MCF 10A (cell line): ENCODE measurements at regions of chr1 and their contacts with region 1.

Region 1: GRCh38 chr1:160801836-160802580 is 6.0 kb downstream of the LY9 start:
- DNase-seq: no peak
- H3K4me3 Mint-ChIP-seq: no peak overlapping the region
- H3K27ac Mint-ChIP-seq: no peak overlapping the region
- H3K4me1 Mint-ChIP-seq: no peaks in the 10 kb centered on the region
- H3K27me3 Mint-ChIP-seq: no peaks in the 10 kb centered on the region
- CTCF ChIP-seq: no peak

Region 2: DNA sequence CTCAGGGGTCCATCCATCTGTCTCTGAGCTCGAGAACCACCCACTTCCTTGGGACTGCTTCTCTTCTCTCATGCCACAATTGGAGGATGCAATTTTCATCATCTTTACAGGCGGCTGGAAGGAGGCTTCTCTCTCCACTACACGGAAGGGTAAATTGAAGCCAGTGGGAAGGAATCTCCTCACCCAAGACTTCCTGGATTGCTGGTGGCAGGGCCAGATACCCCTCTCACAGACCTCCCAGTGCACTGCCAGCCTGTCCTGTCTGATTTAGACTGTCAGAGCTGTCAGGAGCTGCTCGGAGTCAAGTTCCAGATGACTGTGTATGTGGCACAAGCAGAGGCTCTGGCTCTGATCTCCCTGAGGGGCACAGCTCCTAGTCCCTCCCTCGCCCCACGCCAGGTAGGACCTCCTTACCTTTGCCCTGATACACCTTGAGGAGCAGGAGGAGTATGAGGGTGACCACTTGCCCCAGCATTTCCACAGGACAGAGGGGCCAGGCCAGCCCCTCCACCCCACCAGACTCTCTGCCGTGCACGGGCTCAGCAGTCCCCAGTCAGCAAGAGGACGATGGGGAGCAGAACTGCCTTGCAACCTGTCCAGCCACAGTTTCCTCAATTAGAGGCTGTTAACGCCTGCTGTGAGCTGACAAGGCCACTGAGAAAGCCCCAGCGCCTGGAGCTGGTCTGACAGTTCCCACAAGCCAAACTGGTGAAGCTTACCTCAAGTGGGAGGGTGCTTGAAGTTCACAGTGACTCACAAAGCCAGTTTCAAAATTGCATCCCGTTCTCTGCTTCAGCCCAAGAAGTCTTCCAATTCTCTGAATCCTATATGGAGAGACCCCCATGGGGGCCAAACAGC is 60.4 kb after region 1 on chr1 and contains the start of gene CD244:
- CTCF ChIA-PET with region 1: no interaction called
- POLR2A ChIA-PET with region 1: no interaction called
- intact Hi-C with region 1: no loop called
- DNase-seq: no peak
- H3K4me3 Mint-ChIP-seq: no peak within 1 kb of the TSS
- H3K27ac Mint-ChIP-seq: no peak within 1 kb of the TSS
- H3K4me1 Mint-ChIP-seq: no peaks in the 10 kb centered on the region
- H3K27me3 Mint-ChIP-seq: no peaks in the 10 kb centered on the region
- CTCF ChIP-seq: no peak
- total RNA-seq, gene CD244: not detected in 2 replicates

Region 3: GRCh38 chr1:160888926-160889325 is 86.9 kb after region 1 on chr1:
- CTCF ChIA-PET with region 1: interaction called, 10 read pairs
- POLR2A ChIA-PET with region 1: no interaction called
- intact Hi-C with region 1: no loop called
- DNase-seq: no peak
- H3K4me3 Mint-ChIP-seq: no peak overlapping the region
- H3K27ac Mint-ChIP-seq: no peak overlapping the region
- H3K4me1 Mint-ChIP-seq: no peaks in the 10 kb centered on the region
- H3K27me3 Mint-ChIP-seq: no peaks in the 10 kb centered on the region
- CTCF ChIP-seq: no peak